GM10248 (cell line): ENCODE measurements at regions of chr5 and their contacts with region 1.

Region 1: GRCh38 chr5:36079200-36079761 is 12.6 kb upstream of the UGT3A2 start:
- DNase-seq: peak; percentile 71
- CTCF ChIP-seq: peak; percentile 75

Region 2: GRCh38 chr5:35029333-35029732 is 1049.9 kb before region 1 on chr5:
- CTCF ChIA-PET with region 1: no interaction called
- POLR2A ChIA-PET with region 1: no interaction called
- DNase-seq: no peak
- CTCF ChIP-seq: no peak

Region 3: GRCh38 chr5:36029914-36030313 is 49.4 kb before region 1 on chr5:
- CTCF ChIA-PET with region 1: no interaction called
- POLR2A ChIA-PET with region 1: no interaction called
- DNase-seq: no peak
- CTCF ChIP-seq: no peak

Region 4: GRCh38 chr5:36049949-36050348 is 29.3 kb before region 1 on chr5:
- CTCF ChIA-PET with region 1: no interaction called
- POLR2A ChIA-PET with region 1: no interaction called
- DNase-seq: no peak
- CTCF ChIP-seq: no peak

Region 5: GRCh38 chr5:36060420-36060887 is 18.8 kb before region 1 on chr5:
- CTCF ChIA-PET with region 1: interaction called, 12 read pairs
- POLR2A ChIA-PET with region 1: no interaction called
- DNase-seq: no peak
- CTCF ChIP-seq: no peak

Region 6: DNA sequence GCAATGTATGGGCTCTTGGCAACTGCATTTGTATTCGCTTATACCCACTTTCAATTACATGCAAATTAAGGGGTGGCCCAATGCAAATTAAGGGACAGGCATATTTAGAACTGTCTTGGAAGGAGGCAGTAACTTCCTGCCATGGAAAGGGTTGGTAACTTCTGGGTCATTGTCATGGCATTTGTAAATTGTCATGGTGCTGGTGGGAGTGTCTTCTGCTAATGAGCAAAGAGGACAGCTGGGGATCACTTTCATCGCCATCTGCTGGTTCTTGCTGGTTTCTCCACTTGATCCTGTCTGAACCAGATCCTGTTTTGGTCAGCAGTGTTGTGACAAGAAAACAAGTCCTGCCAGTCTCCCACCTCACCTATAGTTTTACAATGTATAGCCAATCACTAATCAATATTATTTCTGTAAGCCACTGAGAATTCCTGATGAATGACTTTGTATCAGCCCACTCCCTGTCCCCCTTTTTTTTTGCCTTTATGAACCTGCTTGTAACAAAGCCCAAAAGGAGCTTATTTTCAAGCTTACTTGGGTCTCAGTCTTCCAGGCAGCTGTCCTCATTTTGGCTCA is 10.8 kb after region 1 on chr5:
- CTCF ChIA-PET with region 1: interaction called, 56 read pairs
- POLR2A ChIA-PET with region 1: no interaction called
- DNase-seq: no peak
- CTCF ChIP-seq: no peak

Region 7: GRCh38 chr5:36305571-36306326 is 226.5 kb after region 1 on chr5:
- CTCF ChIA-PET with region 1: interaction called, 35 read pairs
- POLR2A ChIA-PET with region 1: no interaction called
- DNase-seq: peak; percentile 30
- CTCF ChIP-seq: peak; percentile 78

Region 8: DNA sequence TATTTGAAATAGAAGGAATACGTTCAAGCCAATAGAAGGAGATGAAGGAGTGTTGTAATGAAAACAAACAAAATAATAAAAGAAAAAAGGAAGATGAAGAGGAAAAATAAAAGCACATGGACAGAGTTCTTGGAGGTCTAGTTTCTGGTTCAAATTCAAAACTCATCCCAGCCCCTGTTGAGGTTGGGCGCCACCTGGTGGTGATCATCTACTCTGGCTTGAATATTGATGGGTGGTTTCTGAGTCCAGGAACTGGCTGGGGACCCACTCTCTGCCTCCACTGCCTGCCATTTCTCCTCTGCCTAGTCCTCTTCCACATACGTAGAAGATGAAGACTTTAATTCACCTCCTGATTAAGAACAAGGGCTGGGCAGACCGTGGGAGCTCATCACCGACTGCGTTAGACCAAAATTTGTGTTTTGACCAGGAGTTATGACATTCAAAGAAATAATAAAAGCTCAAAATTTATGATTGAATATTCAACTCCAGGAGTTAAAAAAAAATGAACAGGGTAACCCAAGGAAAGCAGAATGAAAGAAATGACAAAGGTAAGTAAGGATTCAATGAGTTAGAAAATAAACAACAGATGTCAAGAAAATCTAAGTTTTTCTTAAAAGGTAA is 428.2 kb after region 1 on chr5:
- CTCF ChIA-PET with region 1: interaction called, 19 read pairs
- POLR2A ChIA-PET with region 1: no interaction called
- DNase-seq: peak; percentile 65
- CTCF ChIP-seq: peak; percentile 85